ENCODE measurements at regions of chr15 and their contacts with region 1.

Region 1: DNA sequence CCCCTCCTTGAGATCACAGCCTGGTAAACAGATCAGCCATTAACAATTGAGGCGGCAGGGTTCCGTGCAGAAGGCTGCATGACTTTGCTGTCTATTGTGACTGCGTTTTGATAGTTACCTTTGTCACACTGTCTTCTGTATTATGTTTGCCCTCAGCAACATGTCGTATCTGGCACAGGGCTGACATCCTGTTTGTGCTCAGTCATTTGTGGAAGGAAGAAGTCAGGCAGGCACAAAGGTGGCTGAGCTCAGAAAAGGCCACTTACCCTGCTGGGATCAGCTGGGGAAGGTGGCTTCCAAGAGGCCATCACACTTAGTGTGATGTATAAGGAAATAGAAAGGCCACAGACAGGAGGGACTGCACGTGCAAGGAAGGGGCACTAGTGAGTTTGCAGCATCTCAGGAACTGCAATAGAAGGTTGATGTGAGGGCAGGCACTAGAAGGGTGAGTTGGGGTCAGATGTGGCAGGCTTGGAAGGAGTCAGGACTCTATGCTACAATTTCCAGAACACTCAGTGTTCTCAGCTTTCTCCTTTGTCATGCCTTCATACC is 13.4 kb downstream of the PML start:
- DNase-seq: peak; percentile 81
- H3K4me3 Mint-ChIP-seq: peak overlapping the region; percentile 74
- H3K27ac Mint-ChIP-seq: peak overlapping the region; percentile 97
- H3K4me1 Mint-ChIP-seq: peaks cover 50% of the 10 kb centered on the region
- H3K27me3 Mint-ChIP-seq: no peaks in the 10 kb centered on the region

Region 2: GRCh38 chr15:73601451-73602445 is 406.1 kb before region 1 on chr15:
- intact Hi-C with region 1: no loop called
- DNase-seq: no peak
- H3K4me3 Mint-ChIP-seq: no peak overlapping the region
- H3K27ac Mint-ChIP-seq: no peak overlapping the region
- H3K4me1 Mint-ChIP-seq: peaks cover 8% of the 10 kb centered on the region
- H3K27me3 Mint-ChIP-seq: no peaks in the 10 kb centered on the region

Region 3: GRCh38 chr15:73882774-73883419 is 125.0 kb before region 1 on chr15:
- intact Hi-C with region 1: no loop called
- DNase-seq: no peak
- H3K4me3 Mint-ChIP-seq: no peak overlapping the region
- H3K27ac Mint-ChIP-seq: no peak overlapping the region
- H3K4me1 Mint-ChIP-seq: no peaks in the 10 kb centered on the region
- H3K27me3 Mint-ChIP-seq: peaks cover 7% of the 10 kb centered on the region

Region 4: GRCh38 chr15:73982222-73982962 is 25.5 kb before region 1 on chr15:
- intact Hi-C with region 1: loop called (anchors 2 kb)
- DNase-seq: peak; percentile 78
- H3K4me3 Mint-ChIP-seq: peak overlapping the region; percentile 71
- H3K27ac Mint-ChIP-seq: peak overlapping the region; percentile 83
- H3K4me1 Mint-ChIP-seq: peaks cover 54% of the 10 kb centered on the region
- H3K27me3 Mint-ChIP-seq: peaks cover 1% of the 10 kb centered on the region

Region 5: DNA sequence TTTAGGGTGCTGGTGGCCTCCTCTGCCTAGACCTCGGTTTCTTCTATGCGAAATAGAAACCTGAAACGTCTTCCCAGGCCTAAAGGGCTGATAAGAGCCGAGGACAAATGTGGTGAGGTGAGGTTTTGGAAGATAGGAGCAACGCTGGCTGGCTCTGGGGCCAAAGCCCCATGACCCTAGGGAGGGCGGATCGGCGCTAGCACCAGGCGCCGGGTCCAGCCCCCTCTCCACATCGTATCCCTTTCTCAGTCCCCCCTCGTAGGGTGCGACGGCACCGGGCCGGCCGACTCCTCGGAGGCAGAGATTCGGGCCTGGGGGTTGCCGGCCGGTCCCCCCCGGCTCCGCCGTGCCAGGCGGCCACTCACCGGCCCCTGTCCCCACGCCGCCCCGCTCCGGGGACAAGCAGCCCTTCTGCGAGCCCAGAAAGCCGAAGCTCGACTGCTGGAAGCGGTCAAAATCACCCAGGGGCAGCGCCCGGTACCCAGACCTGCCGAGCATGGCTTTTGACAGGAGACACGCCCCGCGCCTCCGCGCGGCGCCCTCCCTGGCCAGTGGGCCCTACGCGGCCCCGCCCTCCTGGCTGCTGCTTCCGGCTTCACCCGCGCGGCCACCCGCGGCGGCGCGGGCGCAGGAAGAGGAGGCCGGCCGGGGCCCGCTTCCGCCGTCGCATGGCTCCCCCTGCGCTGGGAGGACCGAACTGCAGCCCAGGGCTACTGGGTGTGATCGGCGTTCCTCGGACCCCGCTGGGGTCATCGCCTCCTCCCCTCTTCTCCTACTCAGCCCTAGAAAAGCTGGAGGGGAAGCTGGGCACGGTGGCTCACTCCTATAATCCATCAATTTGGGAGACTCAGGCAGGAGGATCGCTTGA is 15.9 kb before region 1 on chr15 and contains the start of gene STOML1:
- intact Hi-C with region 1: loop called (anchors 1 kb)
- DNase-seq: peak; percentile 100
- H3K4me3 Mint-ChIP-seq: peak within 1 kb of the TSS; percentile 85
- H3K27ac Mint-ChIP-seq: peak within 1 kb of the TSS; percentile 86
- H3K4me1 Mint-ChIP-seq: peaks cover 50% of the 10 kb centered on the region
- H3K27me3 Mint-ChIP-seq: no peaks in the 10 kb centered on the region
- total RNA-seq, gene STOML1: 10.3 and 10.6 TPM in 2 replicates

Measured in activated CD4-positive, alpha-beta T cell treated with anti-CD3 and anti-CD28 coated beads, Interleukin-2, amount 10 ng/mL, durations not matched to agents 24 days and 14 days (primary cell).